Astrocyte of the cerebellum (primary cell): ENCODE measurements at regions of chrX and their contacts with region 1.

Region 1: GRCh38 chrX:18424482-18425198 is 768 bp upstream of the CDKL5 start:
- DNase-seq: no peak
- H3K4me3 ChIP-seq: peak overlapping the region; percentile 66
- CTCF ChIP-seq: no peak

Region 2: GRCh38 chrX:18360867-18361266 is 63.8 kb before region 1 on chrX:
- in situ Hi-C with region 1: no loop called
- DNase-seq: no peak
- H3K4me3 ChIP-seq: no peak overlapping the region
- CTCF ChIP-seq: no peak

Region 3: DNA sequence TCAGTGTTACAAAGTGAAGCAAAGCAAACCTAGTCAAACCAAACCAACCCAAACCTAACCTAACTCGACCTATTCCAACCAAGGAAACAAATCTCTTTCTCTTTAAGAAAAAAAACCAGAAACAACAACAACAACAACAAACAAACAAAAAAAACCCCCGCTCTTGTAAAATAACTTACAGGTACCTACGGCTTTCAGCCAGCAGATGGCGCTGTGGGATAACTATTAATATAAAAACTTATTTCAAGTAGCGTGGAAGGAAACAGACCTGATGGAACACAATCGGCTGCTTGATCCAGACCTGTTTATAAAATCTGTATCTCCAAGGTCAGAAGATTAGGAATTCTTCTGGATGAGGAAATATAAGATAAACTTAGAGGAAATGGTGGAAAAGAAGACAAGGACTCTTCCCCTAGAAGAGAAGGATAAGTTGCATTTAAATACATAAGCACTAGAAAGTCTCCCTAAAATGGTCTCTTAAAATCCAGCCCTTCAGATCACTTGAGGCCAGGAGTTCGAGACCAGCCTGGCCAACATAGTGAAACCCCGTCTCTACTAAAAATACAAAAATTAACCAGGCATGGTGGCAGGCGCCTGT is 33.6 kb before region 1 on chrX:
- in situ Hi-C with region 1: no loop called
- DNase-seq: peak; percentile 54
- H3K4me3 ChIP-seq: no peak overlapping the region
- CTCF ChIP-seq: peak; percentile 63

Region 4: DNA sequence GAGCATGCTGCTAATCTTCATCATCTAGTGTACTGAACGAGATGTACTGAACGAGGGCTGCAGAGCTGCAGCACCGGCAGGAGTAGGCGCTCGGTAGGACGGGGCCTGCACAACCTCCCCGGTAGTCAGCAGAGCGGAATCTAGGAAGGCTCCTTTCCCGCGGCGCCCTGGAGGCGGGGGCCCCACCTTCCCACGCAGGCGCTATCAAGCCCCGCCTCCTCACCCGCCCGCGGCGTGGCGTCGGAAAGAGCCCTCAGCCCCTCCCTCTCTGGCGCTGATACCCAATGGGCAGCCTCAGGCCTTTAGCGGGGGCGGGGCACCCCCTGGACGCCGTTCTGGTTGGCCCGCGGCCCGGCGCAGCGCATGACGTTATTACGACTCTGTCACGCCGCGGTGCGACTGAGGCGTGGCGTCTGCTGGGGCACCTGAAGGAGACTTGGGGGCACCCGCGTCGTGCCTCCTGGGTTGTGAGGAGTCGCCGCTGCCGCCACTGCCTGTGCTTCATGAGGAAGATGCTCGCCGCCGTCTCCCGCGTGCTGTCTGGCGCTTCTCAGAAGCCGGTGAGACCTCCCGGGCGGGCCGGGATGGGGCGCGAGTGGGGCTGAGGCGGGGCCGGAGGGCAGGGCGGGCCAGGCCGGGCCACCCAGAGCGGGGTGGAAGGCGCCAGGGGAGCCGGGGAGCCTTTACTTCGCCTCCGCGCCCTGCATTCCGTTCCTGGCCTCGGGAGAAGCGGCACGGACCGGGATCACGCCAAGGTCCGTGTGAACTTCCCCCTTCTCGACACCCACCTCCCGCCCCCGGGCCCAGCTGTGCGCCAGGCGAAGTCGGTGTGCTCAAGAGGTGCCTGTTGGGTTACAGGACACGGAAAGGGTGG is 919.1 kb after region 1 on chrX and contains the start of gene PDHA1:
- in situ Hi-C with region 1: loop called (anchors 25 kb)
- DNase-seq: peak; percentile 64
- H3K4me3 ChIP-seq: peak within 1 kb of the TSS; percentile 71
- CTCF ChIP-seq: no peak